GM12878 (cell line): ENCODE measurements at regions of chr3 and their contacts with region 1.

Region 1: DNA sequence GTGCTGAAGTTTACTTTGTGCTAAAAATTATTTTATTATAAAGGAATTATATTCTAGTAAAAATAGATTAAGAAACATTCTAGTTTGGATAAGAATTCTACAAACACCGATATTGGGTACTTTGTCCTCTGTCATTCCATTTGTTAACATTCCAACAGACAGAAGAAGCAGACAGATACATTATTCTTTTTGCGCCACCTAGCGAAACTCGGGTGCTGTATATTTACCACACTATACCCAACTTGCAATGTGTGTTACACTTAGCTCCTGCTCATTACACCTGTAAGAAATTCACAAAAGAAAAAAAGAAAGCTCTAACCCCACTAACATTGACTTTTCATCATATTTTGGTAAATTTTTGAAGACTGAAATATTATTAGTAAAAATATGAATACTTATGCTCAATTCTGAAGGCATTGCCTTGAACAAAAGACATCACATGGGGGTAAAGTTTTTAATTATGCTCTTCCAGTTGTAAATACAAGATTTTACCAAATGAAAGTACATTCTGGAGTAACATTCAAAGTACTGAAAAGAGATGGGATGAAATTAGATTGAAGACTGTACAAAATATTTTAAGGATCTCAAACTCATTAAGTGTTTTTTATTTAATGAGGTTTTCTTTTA is 136.5 kb upstream of the MLF1 start:
- DNase-seq: peak; percentile 40
- ATAC-seq: peak; percentile 96
- H3K4me3 ChIP-seq: no peak overlapping the region
- H3K27ac ChIP-seq: no peak overlapping the region
- H3K4me1 ChIP-seq: no peaks in the 10 kb centered on the region
- H3K27me3 ChIP-seq: no peaks in the 10 kb centered on the region
- CTCF ChIP-seq: peak; percentile 58 to 88 (median 68); a peak in 4 of 6 replicates
- EP300 ChIP-seq: no peak
- POLR2A ChIP-seq: no peak
- RAD21 ChIP-seq: peak; percentile 94

Region 2: DNA sequence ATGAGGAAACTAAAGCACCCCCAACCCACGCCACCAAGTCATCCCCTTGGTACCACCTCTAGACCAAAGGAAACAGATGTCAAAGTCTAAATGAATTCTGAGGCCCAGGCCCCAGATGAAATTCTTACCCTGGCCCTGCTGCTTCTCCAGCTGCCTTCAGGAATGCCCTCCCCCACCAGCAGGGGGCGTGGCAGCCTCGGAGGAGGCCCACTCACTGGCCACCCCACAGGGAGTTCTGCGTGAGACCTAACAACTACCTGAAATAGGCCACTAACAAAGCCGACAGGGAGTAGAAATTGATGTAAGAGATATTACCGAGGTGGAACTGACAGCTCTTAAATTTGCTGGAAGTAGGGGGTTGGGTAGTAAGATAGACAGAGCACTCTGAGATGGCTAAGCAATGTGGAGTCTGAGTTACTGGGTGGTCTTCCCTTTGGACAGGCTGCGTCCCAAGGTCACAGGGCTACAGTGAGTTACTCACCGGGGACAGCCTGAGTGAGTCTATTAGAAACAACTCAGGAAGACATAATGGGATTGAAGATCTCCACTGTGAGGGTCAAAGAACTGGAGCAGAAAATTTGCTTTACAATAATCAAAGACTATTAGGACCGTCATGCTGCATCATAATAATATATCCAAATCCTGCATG is 569.0 kb before region 1 on chr3:
- CTCF ChIA-PET with region 1: interaction called, 110 read pairs
- POLR2A ChIA-PET with region 1: no interaction called
- RAD21 ChIA-PET with region 1: interaction called, 66 read pairs
- SMC1A ChIA-PET with region 1: interaction called, 51 read pairs
- in situ Hi-C with region 1: loop called (anchors 5 kb)
- intact Hi-C with region 1: loop called (anchors 1 kb)
- DNase-seq: peak; percentile 1
- ATAC-seq: peak; percentile 99
- H3K4me3 ChIP-seq: no peak overlapping the region
- H3K27ac ChIP-seq: no peak overlapping the region
- H3K4me1 ChIP-seq: no peaks in the 10 kb centered on the region
- H3K27me3 ChIP-seq: no peaks in the 10 kb centered on the region
- CTCF ChIP-seq: peak; percentile 84 to 92 (median 85)
- EP300 ChIP-seq: no peak
- POLR2A ChIP-seq: no peak
- RAD21 ChIP-seq: peak; percentile 92

Region 3: DNA sequence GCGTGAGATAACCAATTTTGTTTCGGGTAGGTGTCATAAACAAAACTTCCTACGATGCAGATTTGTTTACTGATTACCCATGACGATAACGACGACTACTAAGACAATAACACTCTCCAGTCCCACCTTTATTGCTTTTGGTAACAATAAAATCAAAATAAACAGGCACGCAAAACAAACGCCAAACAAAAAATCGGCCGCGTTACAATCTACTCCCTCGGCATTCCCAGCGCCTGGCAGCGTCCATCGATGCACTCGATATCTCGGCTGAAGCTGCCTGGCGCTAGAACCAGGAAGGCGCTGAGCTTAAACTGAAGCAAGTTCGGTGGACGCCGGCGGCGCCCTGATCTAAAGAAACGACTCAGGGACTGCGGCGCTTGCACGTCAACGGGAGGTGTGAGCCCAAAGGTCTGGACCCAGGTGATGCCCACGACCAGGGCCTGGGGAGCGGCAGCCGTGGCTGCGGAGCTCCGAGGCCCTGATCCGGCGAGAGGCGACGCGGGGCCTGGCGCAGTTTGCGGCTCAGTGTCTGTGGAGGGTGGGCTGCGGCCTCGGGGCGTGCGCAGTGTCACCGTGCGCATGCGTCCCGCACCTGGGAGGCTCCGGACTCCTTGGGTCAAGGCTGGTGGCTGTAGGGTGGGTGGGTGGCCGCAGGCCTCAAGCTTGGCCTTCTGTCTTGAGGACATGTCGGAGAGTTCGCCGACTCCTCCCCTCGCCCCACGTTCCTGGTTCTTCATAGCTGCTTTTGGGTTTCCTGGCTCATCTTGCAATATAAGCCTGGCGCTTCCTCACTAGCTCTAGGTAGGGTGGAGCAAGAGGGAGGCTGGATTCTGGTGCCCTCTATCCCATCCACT is 324.5 kb before region 1 on chr3 and contains the start of gene RSRC1:
- CTCF ChIA-PET with region 1: interaction called, 20 read pairs
- POLR2A ChIA-PET with region 1: no interaction called
- RAD21 ChIA-PET with region 1: interaction called, 6 read pairs
- SMC1A ChIA-PET with region 1: interaction called, 17 read pairs
- in situ Hi-C with region 1: no loop called
- intact Hi-C with region 1: loop called (anchors 5 kb)
- DNase-seq: peak; percentile 55
- ATAC-seq: peak; percentile 91
- H3K4me3 ChIP-seq: peak within 1 kb of the TSS; percentile 79
- H3K27ac ChIP-seq: peak within 1 kb of the TSS; percentile 80
- H3K4me1 ChIP-seq: 0 out of 2 replicates have a peak, but pooled peaks cover 4% of the 10 kb centered on the region
- H3K27me3 ChIP-seq: peaks cover 6 to 8% of the 10 kb centered on the region in 2 experiments; a peak in 2 of 4 replicates
- CTCF ChIP-seq: no peak
- EP300 ChIP-seq: no peak
- POLR2A ChIP-seq: peak; percentile 84
- RAD21 ChIP-seq: peak; percentile 28; the same call in 1 of the 2 replicates
- polyA plus RNA-seq, gene RSRC1: 47.6 to 83.3 TPM

Region 4: DNA sequence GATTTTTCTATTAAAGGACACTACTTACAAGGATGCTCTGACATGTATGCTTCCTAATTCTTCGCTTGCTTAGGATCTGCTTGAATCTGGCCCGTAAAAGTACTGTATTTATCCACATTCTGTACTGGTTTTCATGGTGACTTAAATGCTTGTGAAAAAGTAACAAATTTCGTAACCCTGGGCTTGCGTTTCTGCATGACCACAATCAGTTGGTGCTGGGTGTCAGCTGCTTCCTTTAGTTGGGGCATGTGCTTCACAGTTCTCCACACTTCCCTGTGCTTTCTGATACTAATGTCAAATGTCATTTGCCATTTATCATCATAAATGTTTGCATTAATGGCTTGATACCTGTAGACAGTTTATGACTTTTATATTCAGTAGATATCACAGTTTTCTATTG is 82.0 kb before region 1 on chr3:
- CTCF ChIA-PET with region 1: interaction called, 5 read pairs
- POLR2A ChIA-PET with region 1: no interaction called
- RAD21 ChIA-PET with region 1: interaction called, 14 read pairs
- SMC1A ChIA-PET with region 1: interaction called, 17 read pairs
- in situ Hi-C with region 1: no loop called
- intact Hi-C with region 1: no loop called
- DNase-seq: no peak
- ATAC-seq: peak; percentile 52
- H3K4me3 ChIP-seq: no peak overlapping the region
- H3K27ac ChIP-seq: no peak overlapping the region
- H3K4me1 ChIP-seq: peaks cover 19% of the 10 kb centered on the region
- H3K27me3 ChIP-seq: no peaks in the 10 kb centered on the region
- CTCF ChIP-seq: no peak
- EP300 ChIP-seq: no peak
- POLR2A ChIP-seq: no peak
- RAD21 ChIP-seq: no peak

Region 5: DNA sequence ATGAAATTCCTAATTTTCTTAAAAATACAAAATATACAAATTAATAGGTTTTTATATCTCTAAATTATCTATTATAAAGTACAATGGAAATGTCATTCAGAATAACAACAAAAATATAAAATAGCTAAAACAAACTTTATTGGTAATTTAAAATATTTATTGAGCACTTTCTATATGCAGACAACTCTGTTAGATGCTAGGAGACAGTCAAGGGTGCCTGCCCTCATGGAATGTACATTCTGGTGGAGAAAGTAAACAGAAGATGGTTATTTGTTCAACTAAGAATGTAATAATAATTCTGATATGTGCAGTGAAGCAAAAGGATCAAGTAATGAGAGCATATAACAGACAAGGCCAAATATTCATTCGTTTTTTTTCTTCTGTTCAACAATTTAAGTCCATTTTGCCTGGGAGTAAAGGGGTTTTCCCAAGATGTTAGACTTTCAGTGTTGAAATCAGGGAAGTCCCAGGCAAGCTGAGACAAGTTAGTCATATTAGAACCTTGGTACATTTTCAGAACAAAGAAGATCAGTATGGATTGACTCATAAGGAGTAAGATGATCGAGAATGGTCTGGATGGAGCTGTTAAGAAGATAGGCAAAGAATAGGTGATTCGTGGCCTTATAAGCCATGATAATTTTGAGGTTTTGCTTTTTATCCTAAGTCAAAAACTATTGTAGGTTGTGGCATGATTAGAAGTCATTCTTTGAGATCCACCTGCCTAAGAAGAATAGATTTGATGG is 13.7 kb before region 1 on chr3:
- CTCF ChIA-PET with region 1: interaction called, 16 read pairs
- POLR2A ChIA-PET with region 1: no interaction called
- RAD21 ChIA-PET with region 1: interaction called, 18 read pairs
- SMC1A ChIA-PET with region 1: interaction called, 30 read pairs
- in situ Hi-C with region 1: no loop called
- intact Hi-C with region 1: no loop called
- DNase-seq: peak; percentile 71
- ATAC-seq: peak; percentile 91
- H3K4me3 ChIP-seq: no peak overlapping the region
- H3K27ac ChIP-seq: peak overlapping the region; percentile 66
- H3K4me1 ChIP-seq: peaks cover 13% of the 10 kb centered on the region
- H3K27me3 ChIP-seq: no peaks in the 10 kb centered on the region
- CTCF ChIP-seq: no peak
- EP300 ChIP-seq: peak; percentile 75 to 92
- POLR2A ChIP-seq: no peak
- RAD21 ChIP-seq: no peak

Region 6: DNA sequence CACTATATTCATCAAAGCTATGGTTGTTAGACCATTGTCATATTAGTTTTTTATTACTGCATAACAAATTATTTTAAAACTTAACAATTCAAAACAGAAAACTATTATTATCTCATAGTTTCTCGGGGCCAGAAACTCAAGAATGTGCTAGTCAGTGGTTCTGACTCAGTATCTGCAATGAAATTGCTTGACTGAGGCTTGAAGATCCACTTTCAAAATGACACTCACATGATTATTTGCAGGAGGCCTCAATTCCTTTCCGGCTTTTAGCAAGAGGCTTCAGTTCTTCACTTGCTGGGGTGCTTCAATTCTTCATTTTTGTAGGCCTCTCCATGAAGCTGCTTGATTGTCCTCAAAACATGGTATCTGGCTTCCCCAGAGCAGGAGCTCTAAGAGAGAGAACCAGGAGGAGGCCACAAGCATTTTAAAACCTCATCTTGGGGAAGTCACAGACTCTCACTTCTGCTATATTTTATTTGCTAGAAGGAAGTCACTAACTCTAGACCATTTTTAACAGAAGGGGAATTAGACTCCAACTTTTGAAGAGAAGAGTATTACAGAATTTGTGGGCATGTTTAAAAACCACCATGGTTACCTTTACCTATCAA is 751.0 kb after region 1 on chr3:
- CTCF ChIA-PET with region 1: no interaction called
- POLR2A ChIA-PET with region 1: no interaction called
- RAD21 ChIA-PET with region 1: no interaction called
- SMC1A ChIA-PET with region 1: no interaction called
- in situ Hi-C with region 1: no loop called
- intact Hi-C with region 1: no loop called
- DNase-seq: peak; percentile 9
- ATAC-seq: peak; percentile 72
- H3K4me3 ChIP-seq: no peak overlapping the region
- H3K27ac ChIP-seq: peak overlapping the region; percentile 61
- H3K4me1 ChIP-seq: peaks cover 23% of the 10 kb centered on the region
- H3K27me3 ChIP-seq: no peaks in the 10 kb centered on the region
- CTCF ChIP-seq: no peak
- EP300 ChIP-seq: no peak
- POLR2A ChIP-seq: no peak
- RAD21 ChIP-seq: no peak

Region 7: GRCh38 chr3:159319156-159319555 is 884.6 kb after region 1 on chr3:
- CTCF ChIA-PET with region 1: no interaction called
- POLR2A ChIA-PET with region 1: no interaction called
- RAD21 ChIA-PET with region 1: no interaction called
- SMC1A ChIA-PET with region 1: no interaction called
- in situ Hi-C with region 1: no loop called
- intact Hi-C with region 1: no loop called
- DNase-seq: no peak
- ATAC-seq: no peak
- H3K4me3 ChIP-seq: no peak overlapping the region
- H3K27ac ChIP-seq: no peak overlapping the region
- H3K4me1 ChIP-seq: no peaks in the 10 kb centered on the region
- H3K27me3 ChIP-seq: no peaks in the 10 kb centered on the region
- CTCF ChIP-seq: no peak
- EP300 ChIP-seq: no peak
- POLR2A ChIP-seq: no peak
- RAD21 ChIP-seq: no peak